IMR-90 (cell line): ENCODE measurements at regions of chr6 and their contacts with region 1.

Region 1: DNA sequence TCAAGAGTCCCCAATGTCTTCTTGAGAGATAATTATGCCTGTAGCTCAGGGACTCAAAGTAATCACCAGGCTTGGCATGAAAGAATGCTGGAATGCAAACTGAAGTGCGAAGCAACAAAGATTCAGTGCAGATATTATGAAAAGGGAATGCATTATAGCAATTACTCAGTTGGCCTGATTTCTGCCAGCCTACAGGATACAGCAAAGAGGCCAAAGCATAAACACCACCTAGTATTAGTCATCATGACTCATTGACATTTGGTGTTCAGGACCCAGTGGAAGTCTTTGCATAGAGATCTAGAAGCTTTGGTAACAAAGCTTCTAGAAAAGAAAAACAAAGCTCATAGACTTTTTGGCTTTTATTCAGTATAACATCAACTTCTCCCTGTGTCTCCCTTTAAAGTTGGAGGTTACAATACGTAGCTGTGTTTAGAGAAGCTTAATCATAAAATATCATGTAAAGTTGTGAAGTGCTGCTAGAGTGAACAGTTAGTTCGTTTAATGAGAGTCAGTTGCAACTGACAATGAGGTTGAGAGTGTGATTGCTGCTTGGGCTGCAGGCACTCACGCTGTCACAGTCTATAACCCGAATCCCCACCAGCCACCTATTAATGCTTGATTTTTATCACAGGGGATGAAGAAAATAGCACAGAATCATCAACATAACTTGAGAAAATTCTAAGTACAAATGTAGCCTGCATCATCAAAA is 932.7 kb downstream of the TFAP2A start:
- DNase-seq: peak; percentile 96
- ATAC-seq: peak; percentile 89
- H3K4me3 ChIP-seq: no peak overlapping the region
- H3K27ac ChIP-seq: peak overlapping the region; percentile 58; the same call in 1 of the 2 replicates
- H3K4me1 ChIP-seq: peaks cover 11% of the 10 kb centered on the region
- H3K27me3 ChIP-seq: no peaks in the 10 kb centered on the region
- CTCF ChIP-seq: no peak
- POLR2A ChIP-seq: no peak
- RAD21 ChIP-seq: no peak

Region 2: GRCh38 chr6:9066726-9067125 is 415.5 kb before region 1 on chr6:
- CTCF ChIA-PET with region 1: no interaction called
- POLR2A ChIA-PET with region 1: no interaction called
- dilution Hi-C with region 1: no loop called
- in situ Hi-C with region 1: no loop called
- intact Hi-C with region 1: no loop called
- DNase-seq: no peak
- ATAC-seq: no peak
- H3K4me3 ChIP-seq: no peak overlapping the region
- H3K27ac ChIP-seq: no peak overlapping the region
- H3K4me1 ChIP-seq: no peaks in the 10 kb centered on the region
- H3K27me3 ChIP-seq: no peaks in the 10 kb centered on the region
- CTCF ChIP-seq: no peak
- POLR2A ChIP-seq: no peak
- RAD21 ChIP-seq: no peak

Region 3: GRCh38 chr6:9520417-9521151 is 38.4 kb after region 1 on chr6:
- CTCF ChIA-PET with region 1: interaction called, 3 read pairs
- POLR2A ChIA-PET with region 1: no interaction called
- dilution Hi-C with region 1: no loop called
- in situ Hi-C with region 1: no loop called
- intact Hi-C with region 1: loop called (anchors 5 kb)
- DNase-seq: peak; percentile 89
- ATAC-seq: peak; percentile 39
- H3K4me3 ChIP-seq: no peak overlapping the region
- H3K27ac ChIP-seq: peak overlapping the region; percentile 57
- H3K4me1 ChIP-seq: peaks cover 10% of the 10 kb centered on the region
- H3K27me3 ChIP-seq: no peaks in the 10 kb centered on the region
- CTCF ChIP-seq: no peak
- POLR2A ChIP-seq: no peak
- RAD21 ChIP-seq: no peak

Region 4: GRCh38 chr6:9593566-9593965 is 111.4 kb after region 1 on chr6:
- CTCF ChIA-PET with region 1: no interaction called
- POLR2A ChIA-PET with region 1: no interaction called
- dilution Hi-C with region 1: no loop called
- in situ Hi-C with region 1: no loop called
- intact Hi-C with region 1: no loop called
- DNase-seq: peak; percentile 8
- ATAC-seq: no peak
- H3K4me3 ChIP-seq: no peak overlapping the region
- H3K27ac ChIP-seq: no peak overlapping the region
- H3K4me1 ChIP-seq: no peaks in the 10 kb centered on the region
- H3K27me3 ChIP-seq: no peaks in the 10 kb centered on the region
- CTCF ChIP-seq: no peak
- POLR2A ChIP-seq: no peak
- RAD21 ChIP-seq: no peak